AG04449 (cell line): ENCODE measurements at regions of chr1 and their contacts with region 1.

Region 1: GRCh38 chr1:10530281-10530740 is 55.6 kb downstream of the PEX14 start:
- DNase-seq: no peak
- H3K4me3 ChIP-seq: peak overlapping the region; percentile 52
- CTCF ChIP-seq: peak; percentile 96

Region 2: DNA sequence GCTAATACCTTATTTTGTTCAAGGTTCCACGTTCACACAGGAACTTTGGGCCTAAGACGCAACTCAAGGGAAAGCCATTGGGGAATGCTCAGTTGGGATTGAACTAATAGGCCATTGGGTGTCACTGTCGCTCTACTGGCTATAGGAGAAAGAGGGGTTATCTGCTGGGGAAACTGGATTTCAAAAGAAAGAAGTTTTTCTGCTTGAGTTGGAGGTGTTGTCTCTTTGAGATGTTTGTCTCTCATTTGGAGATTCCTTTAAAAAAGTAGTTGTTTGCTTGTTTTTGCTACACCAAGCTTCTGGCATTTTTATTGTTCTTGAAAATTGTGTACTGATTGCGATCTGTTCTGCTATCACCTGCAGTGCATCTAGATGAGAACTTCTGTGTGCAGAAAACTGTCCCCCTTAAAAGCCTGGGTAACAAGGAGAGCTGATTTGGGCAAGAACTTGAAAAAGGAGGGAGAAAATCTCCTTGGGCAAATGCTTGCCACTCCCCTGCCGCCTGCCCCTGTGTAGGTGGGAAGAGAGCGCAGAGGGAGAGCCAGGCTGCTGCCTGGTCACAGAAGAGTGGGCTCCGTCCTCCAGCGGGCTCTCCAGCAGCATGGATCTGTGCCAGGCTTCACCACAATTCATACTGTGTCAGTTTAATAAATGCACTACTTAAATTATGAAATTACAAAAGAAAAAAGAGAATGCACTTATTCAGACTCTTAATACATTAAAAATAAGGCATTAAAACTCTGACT is 15.6 kb before region 1 on chr1:
- CTCF ChIA-PET with region 1: interaction called, 26 read pairs
- POLR2A ChIA-PET with region 1: interaction called, 5 read pairs
- DNase-seq: no peak
- H3K4me3 ChIP-seq: no peak overlapping the region
- CTCF ChIP-seq: peak; percentile 44

Region 3: GRCh38 chr1:10540277-10541005 is 10.1 kb after region 1 on chr1:
- CTCF ChIA-PET with region 1: interaction called, 22 read pairs
- POLR2A ChIA-PET with region 1: interaction called, 3 read pairs
- DNase-seq: no peak
- H3K4me3 ChIP-seq: no peak overlapping the region
- CTCF ChIP-seq: no peak